H1 (cell line): ENCODE measurements at regions of chr18 and their contacts with region 1.

Region 1: GRCh38 chr18:6401687-6402086 is 13.0 kb downstream of the L3MBTL4 start:
- DNase-seq: peak in 1 of 2 experiments; percentile 60
- H3K4me3 ChIP-seq: no peak overlapping the region
- H3K27ac ChIP-seq: no peak overlapping the region
- H3K4me1 ChIP-seq: peaks cover 0 to 3% (median 0%) of the 10 kb centered on the region in 4 experiments; a peak in 2 of 7 replicates
- H3K27me3 ChIP-seq: no peaks in the 10 kb centered on the region
- CTCF ChIP-seq: peak; percentile 65 to 85 (median 73)
- EP300 ChIP-seq: no peak
- POLR2A ChIP-seq: no peak
- RAD21 ChIP-seq: peak; percentile 83 to 90

Region 2: GRCh38 chr18:6286549-6286948 is 115.1 kb before region 1 on chr18:
- CTCF ChIA-PET with region 1: interaction called, 12 read pairs
- POLR2A ChIA-PET with region 1: no interaction called
- DNase-seq: no peak
- H3K4me3 ChIP-seq: no peak overlapping the region
- H3K27ac ChIP-seq: no peak overlapping the region
- H3K4me1 ChIP-seq: no peaks in the 10 kb centered on the region
- H3K27me3 ChIP-seq: no peaks in the 10 kb centered on the region
- CTCF ChIP-seq: no peak
- EP300 ChIP-seq: no peak
- POLR2A ChIP-seq: no peak
- RAD21 ChIP-seq: no peak

Region 3: DNA sequence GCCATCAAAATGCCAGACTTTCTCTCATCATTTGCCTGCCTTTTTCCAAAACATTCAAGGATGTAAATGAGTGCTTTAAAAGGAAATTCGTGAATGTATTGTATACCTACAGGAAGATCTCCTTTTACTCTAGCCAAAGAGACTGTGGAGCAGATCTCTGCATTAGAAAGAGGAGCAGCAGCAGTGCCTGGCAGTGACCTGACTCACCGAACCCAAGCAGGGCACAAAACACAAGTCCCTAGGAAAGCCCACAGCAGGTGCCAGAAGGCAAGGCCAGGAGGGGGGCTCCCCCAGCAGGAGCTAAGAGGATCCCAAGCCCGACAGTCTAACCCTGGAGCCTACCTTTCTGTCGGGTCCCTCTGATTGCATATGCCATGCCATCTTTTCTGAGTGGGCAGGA is 34.9 kb before region 1 on chr18:
- CTCF ChIA-PET with region 1: interaction called, 21 read pairs
- POLR2A ChIA-PET with region 1: no interaction called
- DNase-seq: peak in 1 of 2 experiments; percentile 23
- H3K4me3 ChIP-seq: 0 out of 8 replicates have a peak overlapping the region, but pooled peaks of 1 of the 4 experiments have one; percentile 10
- H3K27ac ChIP-seq: no peak overlapping the region
- H3K4me1 ChIP-seq: peaks cover 6 to 16% (median 8%) of the 10 kb centered on the region in 4 experiments
- H3K27me3 ChIP-seq: no peaks in the 10 kb centered on the region
- CTCF ChIP-seq: no peak
- EP300 ChIP-seq: no peak
- POLR2A ChIP-seq: no peak
- RAD21 ChIP-seq: 0 out of 4 replicates have a peak, but pooled peaks of 1 of the 2 experiments have one; percentile 4